SK-N-SH (cell line): ENCODE measurements at regions of chr4 and their contacts with region 1.

Region 1: GRCh38 chr4:170027181-170027829 is 1.1 kb upstream of the MFAP3L start:
- DNase-seq: peak; percentile 95
- H3K4me3 ChIP-seq: peak overlapping the region; percentile 87 to 98
- H3K27ac ChIP-seq: peak overlapping the region; percentile 89 to 92
- H3K4me1 ChIP-seq: peaks cover 0 to 3% of the 10 kb centered on the region in 2 experiments; a peak in 1 of 4 replicates
- H3K27me3 ChIP-seq: no peaks in the 10 kb centered on the region
- CTCF ChIP-seq: no peak
- EP300 ChIP-seq: no peak
- RAD21 ChIP-seq: no peak

Region 2: DNA sequence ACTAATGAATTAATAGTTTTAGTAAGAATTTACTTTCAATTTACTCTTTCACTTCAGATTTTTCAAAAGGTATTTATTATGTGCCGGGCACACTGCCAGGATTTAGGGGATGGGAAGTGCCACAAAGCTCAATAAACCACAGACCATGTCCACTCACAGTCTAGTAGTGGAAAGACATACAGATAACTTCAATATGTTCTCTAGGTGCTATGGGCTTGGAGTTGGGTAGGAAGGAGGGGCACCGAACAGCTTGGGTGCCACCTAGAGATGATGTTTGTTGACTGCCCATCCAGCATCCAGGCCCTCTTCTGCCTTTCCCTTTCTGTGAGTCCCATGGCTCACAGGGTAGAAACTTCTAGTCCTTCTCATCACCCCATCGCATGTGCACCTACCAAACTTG is 18.9 kb before region 1 on chr4:
- CTCF ChIA-PET with region 1: interaction called, 13 read pairs
- POLR2A ChIA-PET with region 1: no interaction called
- DNase-seq: no peak
- H3K4me3 ChIP-seq: no peak overlapping the region
- H3K27ac ChIP-seq: no peak overlapping the region
- H3K4me1 ChIP-seq: peaks cover 0 to 5% of the 10 kb centered on the region in 2 experiments; a peak in 2 of 4 replicates
- H3K27me3 ChIP-seq: no peaks in the 10 kb centered on the region
- CTCF ChIP-seq: no peak
- EP300 ChIP-seq: no peak
- RAD21 ChIP-seq: no peak